ENCODE measurements at regions of chr4 and their contacts with region 1.

Region 1: GRCh38 chr4:7067452-7068278 is at the start of gene GRPEL1:
- DNase-seq: peak; percentile 99
- H3K4me3 Mint-ChIP-seq: peak within 1 kb of the TSS; percentile 89
- H3K27ac Mint-ChIP-seq: peak within 1 kb of the TSS; percentile 93
- H3K4me1 Mint-ChIP-seq: peaks cover 34% of the 10 kb centered on the region
- H3K27me3 Mint-ChIP-seq: peaks cover 12% of the 10 kb centered on the region
- total RNA-seq, gene GRPEL1: 84.4 and 84.6 TPM in 2 replicates

Region 2: GRCh38 chr4:6716018-6716911 is 351.4 kb before region 1 on chr4 and contains the start of gene BLOC1S4:
- intact Hi-C with region 1: loop called (anchors 2 kb)
- DNase-seq: peak; percentile 87
- H3K4me3 Mint-ChIP-seq: peak within 1 kb of the TSS; percentile 92
- H3K27ac Mint-ChIP-seq: peak within 1 kb of the TSS; percentile 95
- H3K4me1 Mint-ChIP-seq: peaks cover 24% of the 10 kb centered on the region
- H3K27me3 Mint-ChIP-seq: no peaks in the 10 kb centered on the region
- total RNA-seq, gene BLOC1S4: 18.2 and 20.8 TPM in 2 replicates

Region 3: GRCh38 chr4:6783053-6783981 is 284.3 kb before region 1 on chr4:
- intact Hi-C with region 1: loop called (anchors 1 kb)
- DNase-seq: peak; percentile 86
- H3K4me3 Mint-ChIP-seq: peak overlapping the region; percentile 79
- H3K27ac Mint-ChIP-seq: peak overlapping the region; percentile 75
- H3K4me1 Mint-ChIP-seq: peaks cover 55% of the 10 kb centered on the region
- H3K27me3 Mint-ChIP-seq: no peaks in the 10 kb centered on the region

Region 4: DNA sequence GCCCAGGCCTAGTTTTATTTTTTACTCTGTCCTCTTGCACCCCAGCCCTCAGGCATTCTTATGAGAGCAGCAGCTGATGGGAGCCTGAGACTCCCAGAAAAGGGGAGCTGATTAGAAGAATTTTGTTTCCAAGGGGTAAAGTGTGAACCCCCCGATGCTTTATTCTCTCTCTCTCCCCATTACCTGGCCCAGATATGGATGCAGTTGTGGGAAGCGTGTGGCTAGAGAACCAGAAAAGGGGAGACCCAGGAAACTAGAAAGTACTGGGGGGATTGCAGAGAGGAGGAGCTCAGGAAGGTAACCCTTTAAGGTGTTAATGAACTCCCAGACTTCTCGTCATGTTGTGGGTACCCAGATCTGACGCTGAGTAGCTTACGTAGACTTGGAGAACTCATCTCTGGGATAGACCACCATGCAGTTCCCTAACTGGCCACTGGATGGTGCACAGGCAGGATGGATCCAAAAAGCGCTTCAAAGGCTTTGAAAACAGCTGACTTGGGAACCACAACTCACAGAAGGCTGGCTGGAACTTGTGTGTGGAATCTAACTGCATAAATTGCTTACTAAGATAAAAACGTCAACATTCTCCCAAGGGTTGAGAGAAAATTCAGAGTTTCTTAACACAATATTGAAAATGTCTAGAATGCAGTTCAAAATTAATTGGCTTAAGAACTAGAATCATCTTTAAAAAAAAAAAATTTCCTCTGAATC is 93.4 kb before region 1 on chr4:
- intact Hi-C with region 1: loop called (anchors 1 kb)
- DNase-seq: peak; percentile 67
- H3K4me3 Mint-ChIP-seq: no peak overlapping the region
- H3K27ac Mint-ChIP-seq: no peak overlapping the region
- H3K4me1 Mint-ChIP-seq: peaks cover 7% of the 10 kb centered on the region
- H3K27me3 Mint-ChIP-seq: no peaks in the 10 kb centered on the region

Region 5: GRCh38 chr4:7042697-7043464 is 24.8 kb before region 1 on chr4 and contains the start of gene TADA2B:
- intact Hi-C with region 1: loop called (anchors 1 kb)
- DNase-seq: peak; percentile 94
- H3K4me3 Mint-ChIP-seq: peak within 1 kb of the TSS; percentile 86
- H3K27ac Mint-ChIP-seq: peak within 1 kb of the TSS; percentile 65
- H3K4me1 Mint-ChIP-seq: peaks cover 38% of the 10 kb centered on the region
- H3K27me3 Mint-ChIP-seq: peaks cover 7% of the 10 kb centered on the region
- total RNA-seq, gene TADA2B: 12.9 and 13.3 TPM in 2 replicates

Region 6: GRCh38 chr4:7101692-7102515 is 34.2 kb after region 1 on chr4:
- intact Hi-C with region 1: loop called (anchors 2 kb)
- DNase-seq: peak; percentile 48
- H3K4me3 Mint-ChIP-seq: peak overlapping the region; percentile 94
- H3K27ac Mint-ChIP-seq: no peak overlapping the region
- H3K4me1 Mint-ChIP-seq: peaks cover 9% of the 10 kb centered on the region
- H3K27me3 Mint-ChIP-seq: peaks cover 20% of the 10 kb centered on the region